Activated CD4-positive, alpha-beta T cell treated with anti-CD3 and anti-CD28 coated beads for 36 hours (primary cell): ENCODE measurements at regions of chr3 and their contacts with region 1.

Region 1: DNA sequence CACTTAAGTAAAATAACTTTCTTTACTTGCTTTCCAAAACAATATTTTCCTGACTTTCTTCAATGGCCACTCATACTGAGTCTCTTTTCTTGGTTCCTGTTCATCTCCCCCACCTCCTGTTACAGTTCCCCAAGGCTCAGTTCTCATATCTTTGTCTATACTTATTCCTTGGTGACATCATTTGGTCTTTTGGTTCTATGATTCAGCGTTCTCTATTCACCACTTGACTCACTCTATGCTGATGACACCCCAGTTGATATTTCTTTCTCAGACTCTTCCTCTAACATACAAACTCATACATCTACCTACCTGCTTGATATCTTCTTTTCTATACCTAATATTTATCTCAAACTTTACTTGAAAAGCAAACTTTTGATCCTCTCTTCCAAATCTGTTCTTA is 85.0 kb upstream of the P3H2 start:
- DNase-seq: no peak
- ATAC-seq: peak; percentile 93
- H3K4me3 Mint-ChIP-seq: no peak overlapping the region
- H3K27ac Mint-ChIP-seq: peak overlapping the region; percentile 67
- H3K4me1 Mint-ChIP-seq: peaks cover 18% of the 10 kb centered on the region
- H3K27me3 Mint-ChIP-seq: peaks cover 29% of the 10 kb centered on the region

Region 2: DNA sequence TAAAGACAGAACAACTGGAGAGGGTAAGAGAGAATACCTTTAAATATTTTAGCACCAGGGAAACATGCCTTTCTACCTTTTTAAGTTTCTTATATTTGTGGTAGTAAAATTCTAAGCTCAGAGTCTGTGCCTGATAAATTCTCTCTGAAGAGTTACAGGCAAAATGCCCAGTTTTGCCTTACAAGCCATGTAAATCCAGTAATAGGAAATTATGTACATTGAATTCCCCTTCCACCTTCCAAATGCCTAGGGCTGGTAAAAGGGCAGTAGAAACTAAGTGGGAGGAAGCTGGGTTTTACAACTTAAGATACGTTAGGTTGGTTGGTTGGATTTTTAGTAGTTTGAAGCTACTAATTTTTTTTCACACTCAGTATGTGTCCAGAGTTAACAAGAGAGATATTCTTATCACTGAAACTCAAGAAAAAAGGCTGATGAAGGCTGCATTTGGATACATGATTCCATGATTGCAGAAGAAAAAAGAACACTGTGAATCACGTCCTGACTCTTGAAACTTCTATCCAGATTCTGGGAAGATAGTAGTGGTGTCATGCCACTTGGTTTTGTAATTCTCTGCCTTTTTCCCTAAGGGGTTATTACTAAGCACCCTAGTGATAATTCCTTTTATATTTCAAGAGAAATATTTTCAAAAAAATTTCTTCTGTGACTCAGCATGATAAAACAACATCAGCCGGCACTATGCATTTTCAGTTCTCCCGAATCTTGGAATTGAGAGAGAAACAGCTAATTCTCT is 617.5 kb before region 1 on chr3:
- CTCF ChIA-PET with region 1: no interaction called
- POLR2A ChIA-PET with region 1: no interaction called
- intact Hi-C with region 1: loop called in 1 of 2 experiments (anchors 10 kb)
- DNase-seq: no peak
- ATAC-seq: no peak
- H3K4me3 Mint-ChIP-seq: no peak overlapping the region
- H3K27ac Mint-ChIP-seq: no peak overlapping the region
- H3K4me1 Mint-ChIP-seq: peaks cover 18% of the 10 kb centered on the region
- H3K27me3 Mint-ChIP-seq: no peaks in the 10 kb centered on the region

Region 3: GRCh38 chr3:189961525-189962161 is 244.1 kb before region 1 on chr3:
- CTCF ChIA-PET with region 1: interaction called, 24 read pairs
- POLR2A ChIA-PET with region 1: no interaction called
- intact Hi-C with region 1: no loop called
- DNase-seq: peak; percentile 85
- ATAC-seq: peak; percentile 78
- H3K4me3 Mint-ChIP-seq: no peak overlapping the region
- H3K27ac Mint-ChIP-seq: no peak overlapping the region
- H3K4me1 Mint-ChIP-seq: peaks cover 8% of the 10 kb centered on the region
- H3K27me3 Mint-ChIP-seq: peaks cover 7% of the 10 kb centered on the region

Region 4: DNA sequence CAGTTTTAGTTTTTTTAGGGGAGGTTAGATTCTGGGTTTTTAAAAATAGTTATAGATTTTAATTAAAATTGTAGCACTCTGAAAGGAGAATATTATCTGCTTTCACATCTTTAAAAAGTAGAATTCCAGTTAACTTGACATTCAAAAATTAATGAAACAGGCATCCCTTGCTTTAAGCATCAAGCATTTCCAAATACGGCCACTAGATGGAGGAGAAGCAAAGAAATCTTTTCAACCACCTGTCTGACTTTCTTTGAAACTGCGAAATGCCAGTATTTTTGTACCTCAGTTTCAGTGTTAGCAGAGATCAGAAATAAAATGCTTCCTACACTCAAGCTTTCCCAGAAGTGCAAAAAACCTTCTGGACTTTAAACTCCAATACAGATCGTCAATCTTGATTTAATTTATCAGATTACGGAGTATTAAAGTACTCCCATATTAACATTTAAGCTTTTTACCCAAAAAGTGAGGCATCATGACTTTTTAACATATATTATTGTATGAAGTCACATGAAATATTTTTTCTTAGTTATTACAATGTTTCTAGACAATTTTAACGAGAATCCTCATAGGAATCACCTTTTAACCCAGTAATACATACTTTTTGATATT is 238.4 kb before region 1 on chr3:
- CTCF ChIA-PET with region 1: interaction called, 24 read pairs
- POLR2A ChIA-PET with region 1: no interaction called
- intact Hi-C with region 1: loop called (anchors 1 kb)
- DNase-seq: no peak
- ATAC-seq: no peak
- H3K4me3 Mint-ChIP-seq: no peak overlapping the region
- H3K27ac Mint-ChIP-seq: no peak overlapping the region
- H3K4me1 Mint-ChIP-seq: peaks cover 2% of the 10 kb centered on the region
- H3K27me3 Mint-ChIP-seq: peaks cover 7% of the 10 kb centered on the region

Region 5: GRCh38 chr3:190017521-190018288 is 188.0 kb before region 1 on chr3:
- CTCF ChIA-PET with region 1: no interaction called
- POLR2A ChIA-PET with region 1: no interaction called
- intact Hi-C with region 1: loop called (anchors 5 kb)
- DNase-seq: no peak
- ATAC-seq: no peak
- H3K4me3 Mint-ChIP-seq: no peak overlapping the region
- H3K27ac Mint-ChIP-seq: no peak overlapping the region
- H3K4me1 Mint-ChIP-seq: no peaks in the 10 kb centered on the region
- H3K27me3 Mint-ChIP-seq: peaks cover 20% of the 10 kb centered on the region

Region 6: GRCh38 chr3:190239325-190239724 is 33.6 kb after region 1 on chr3:
- CTCF ChIA-PET with region 1: no interaction called
- POLR2A ChIA-PET with region 1: no interaction called
- intact Hi-C with region 1: no loop called
- DNase-seq: no peak
- ATAC-seq: no peak
- H3K4me3 Mint-ChIP-seq: no peak overlapping the region
- H3K27ac Mint-ChIP-seq: no peak overlapping the region
- H3K4me1 Mint-ChIP-seq: no peaks in the 10 kb centered on the region
- H3K27me3 Mint-ChIP-seq: peaks cover 6% of the 10 kb centered on the region

Region 7: DNA sequence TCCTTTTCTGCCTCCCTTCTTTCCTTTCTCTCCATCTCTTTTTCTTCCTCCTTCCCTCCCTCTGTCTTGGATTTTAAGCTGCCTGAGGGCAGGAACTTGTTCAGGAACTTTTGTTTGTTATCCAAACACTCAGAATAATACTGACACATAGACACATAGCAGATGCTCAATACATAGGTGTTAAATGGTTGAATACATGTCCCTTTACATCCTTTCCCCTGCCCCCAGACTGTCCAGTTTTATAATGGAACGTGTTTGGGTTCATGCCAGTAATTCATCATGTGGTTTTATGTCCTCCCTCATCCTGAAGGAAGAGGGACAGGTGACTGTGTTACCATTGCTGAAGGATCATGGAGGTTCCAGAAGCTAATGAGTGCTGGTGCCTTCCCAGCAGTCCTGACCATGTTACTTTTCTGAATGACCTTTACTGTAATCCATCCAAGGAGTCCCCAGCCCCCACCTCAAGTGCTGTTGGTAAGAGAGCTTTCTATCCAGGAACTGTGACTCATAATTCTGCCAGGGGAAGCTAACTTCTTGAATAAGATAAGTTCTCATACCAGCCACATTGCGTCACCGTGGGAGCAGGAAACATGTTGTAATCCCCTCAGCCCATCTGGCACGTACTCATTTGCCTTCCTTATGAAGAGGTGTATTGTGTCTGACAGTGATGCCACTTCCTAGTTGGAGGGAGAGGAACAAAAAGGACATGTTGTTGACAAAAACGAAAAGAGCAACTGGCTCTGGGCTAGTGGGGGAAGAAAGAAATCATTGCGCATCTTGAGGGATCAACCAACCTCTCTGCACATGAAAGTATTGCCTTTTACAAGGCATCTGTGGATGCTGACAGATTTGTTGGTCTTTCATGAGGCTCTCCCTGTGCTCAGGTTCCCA is 360.5 kb after region 1 on chr3:
- CTCF ChIA-PET with region 1: no interaction called
- POLR2A ChIA-PET with region 1: no interaction called
- intact Hi-C with region 1: loop called in 1 of 2 experiments (anchors 5 kb)
- DNase-seq: peak; percentile 92
- ATAC-seq: peak; percentile 88
- H3K4me3 Mint-ChIP-seq: no peak overlapping the region
- H3K27ac Mint-ChIP-seq: peak overlapping the region; percentile 97
- H3K4me1 Mint-ChIP-seq: peaks cover 61% of the 10 kb centered on the region
- H3K27me3 Mint-ChIP-seq: no peaks in the 10 kb centered on the region